GM12878 (cell line): ENCODE measurements at regions of chr5 and their contacts with region 1.

Region 1: GRCh38 chr5:168219515-168220410 is 71.7 kb upstream of the WWC1 start:
- DNase-seq: peak; percentile 68
- ATAC-seq: peak; percentile 90
- H3K4me3 ChIP-seq: no peak overlapping the region
- H3K27ac ChIP-seq: no peak overlapping the region
- H3K4me1 ChIP-seq: no peaks in the 10 kb centered on the region
- H3K27me3 ChIP-seq: peaks cover 0 to 1% of the 10 kb centered on the region in 2 experiments; a peak in 2 of 4 replicates
- CTCF ChIP-seq: peak; percentile 82 to 96 (median 94); a peak in 5 of 6 replicates
- EP300 ChIP-seq: no peak
- POLR2A ChIP-seq: no peak
- RAD21 ChIP-seq: peak; percentile 98

Region 2: DNA sequence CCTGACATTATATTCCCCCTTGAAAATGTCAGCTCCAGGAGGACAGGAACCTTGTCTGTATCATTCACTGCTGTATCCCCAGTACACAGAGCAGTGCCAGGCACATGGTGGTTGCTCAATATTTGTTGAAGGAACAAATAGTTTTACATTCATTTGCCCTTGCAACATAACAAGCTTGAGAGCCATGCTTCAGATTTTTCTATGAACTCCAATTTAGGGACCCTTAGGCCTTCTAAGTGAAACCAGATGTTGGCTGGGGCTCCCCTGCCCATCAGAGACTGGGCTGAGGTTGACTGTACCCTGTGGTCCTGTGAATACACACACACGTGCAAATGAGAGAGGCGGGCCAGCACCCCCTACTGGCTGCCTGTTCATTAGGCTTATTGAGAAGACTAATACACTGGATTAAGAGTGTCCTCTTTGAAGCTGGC is 143.2 kb before region 1 on chr5:
- CTCF ChIA-PET with region 1: interaction called, 11 read pairs
- POLR2A ChIA-PET with region 1: no interaction called
- RAD21 ChIA-PET with region 1: no interaction called
- SMC1A ChIA-PET with region 1: no interaction called
- in situ Hi-C with region 1: no loop called
- intact Hi-C with region 1: no loop called
- DNase-seq: no peak
- ATAC-seq: peak; percentile 69
- H3K4me3 ChIP-seq: no peak overlapping the region
- H3K27ac ChIP-seq: no peak overlapping the region
- H3K4me1 ChIP-seq: no peaks in the 10 kb centered on the region
- H3K27me3 ChIP-seq: no peaks in the 10 kb centered on the region; a peak in 1 of 4 replicates
- CTCF ChIP-seq: peak; percentile 24 to 59 (median 45); a peak in 5 of 6 replicates
- EP300 ChIP-seq: no peak
- POLR2A ChIP-seq: no peak
- RAD21 ChIP-seq: peak; percentile 46

Region 3: GRCh38 chr5:168109441-168109840 is 110.3 kb before region 1 on chr5:
- CTCF ChIA-PET with region 1: interaction called, 81 read pairs
- POLR2A ChIA-PET with region 1: interaction called, 5 read pairs
- RAD21 ChIA-PET with region 1: interaction called, 28 read pairs
- SMC1A ChIA-PET with region 1: interaction called, 19 read pairs
- in situ Hi-C with region 1: no loop called
- intact Hi-C with region 1: loop called (anchors 1 kb)
- DNase-seq: no peak
- ATAC-seq: no peak
- H3K4me3 ChIP-seq: no peak overlapping the region
- H3K27ac ChIP-seq: no peak overlapping the region
- H3K4me1 ChIP-seq: no peaks in the 10 kb centered on the region
- H3K27me3 ChIP-seq: peaks cover 0 to 1% of the 10 kb centered on the region in 2 experiments
- CTCF ChIP-seq: no peak
- EP300 ChIP-seq: no peak
- POLR2A ChIP-seq: no peak
- RAD21 ChIP-seq: no peak

Region 4: GRCh38 chr5:168114444-168115017 is 105.2 kb before region 1 on chr5:
- CTCF ChIA-PET with region 1: interaction called, 81 read pairs
- POLR2A ChIA-PET with region 1: no interaction called
- RAD21 ChIA-PET with region 1: interaction called, 28 read pairs
- SMC1A ChIA-PET with region 1: interaction called, 19 read pairs
- in situ Hi-C with region 1: loop called (anchors 5 kb)
- intact Hi-C with region 1: loop called (anchors 1 kb)
- DNase-seq: no peak
- ATAC-seq: peak; percentile 99
- H3K4me3 ChIP-seq: no peak overlapping the region
- H3K27ac ChIP-seq: no peak overlapping the region
- H3K4me1 ChIP-seq: no peaks in the 10 kb centered on the region
- H3K27me3 ChIP-seq: no peaks in the 10 kb centered on the region; a peak in 2 of 4 replicates
- CTCF ChIP-seq: peak; percentile 73 to 86 (median 85)
- EP300 ChIP-seq: no peak
- POLR2A ChIP-seq: no peak
- RAD21 ChIP-seq: peak; percentile 86

Region 5: GRCh38 chr5:168244838-168245559 is 25.2 kb after region 1 on chr5:
- CTCF ChIA-PET with region 1: no interaction called
- POLR2A ChIA-PET with region 1: no interaction called
- RAD21 ChIA-PET with region 1: no interaction called
- SMC1A ChIA-PET with region 1: no interaction called
- in situ Hi-C with region 1: no loop called
- intact Hi-C with region 1: no loop called
- DNase-seq: no peak
- ATAC-seq: no peak
- H3K4me3 ChIP-seq: no peak overlapping the region
- H3K27ac ChIP-seq: no peak overlapping the region
- H3K4me1 ChIP-seq: peaks cover 37% of the 10 kb centered on the region
- H3K27me3 ChIP-seq: no peaks in the 10 kb centered on the region; a peak in 1 of 4 replicates
- CTCF ChIP-seq: no peak
- EP300 ChIP-seq: no peak
- POLR2A ChIP-seq: no peak
- RAD21 ChIP-seq: no peak